ENCODE measurements at regions of chr3 and their contacts with region 1.

Region 1: GRCh38 chr3:124559881-124560574 is 170.2 kb upstream of the UMPS start:
- DNase-seq: peak; percentile 74 to 78
- H3K4me3 ChIP-seq: no peak overlapping the region
- H3K27ac ChIP-seq: peak overlapping the region; percentile 22 to 66
- H3K4me1 ChIP-seq: peaks cover 0 to 37% (median 24%) of the 10 kb centered on the region in 4 donors
- H3K27me3 ChIP-seq: no peaks in the 10 kb centered on the region
- CTCF ChIP-seq: peak; percentile 76 to 87

Region 2: DNA sequence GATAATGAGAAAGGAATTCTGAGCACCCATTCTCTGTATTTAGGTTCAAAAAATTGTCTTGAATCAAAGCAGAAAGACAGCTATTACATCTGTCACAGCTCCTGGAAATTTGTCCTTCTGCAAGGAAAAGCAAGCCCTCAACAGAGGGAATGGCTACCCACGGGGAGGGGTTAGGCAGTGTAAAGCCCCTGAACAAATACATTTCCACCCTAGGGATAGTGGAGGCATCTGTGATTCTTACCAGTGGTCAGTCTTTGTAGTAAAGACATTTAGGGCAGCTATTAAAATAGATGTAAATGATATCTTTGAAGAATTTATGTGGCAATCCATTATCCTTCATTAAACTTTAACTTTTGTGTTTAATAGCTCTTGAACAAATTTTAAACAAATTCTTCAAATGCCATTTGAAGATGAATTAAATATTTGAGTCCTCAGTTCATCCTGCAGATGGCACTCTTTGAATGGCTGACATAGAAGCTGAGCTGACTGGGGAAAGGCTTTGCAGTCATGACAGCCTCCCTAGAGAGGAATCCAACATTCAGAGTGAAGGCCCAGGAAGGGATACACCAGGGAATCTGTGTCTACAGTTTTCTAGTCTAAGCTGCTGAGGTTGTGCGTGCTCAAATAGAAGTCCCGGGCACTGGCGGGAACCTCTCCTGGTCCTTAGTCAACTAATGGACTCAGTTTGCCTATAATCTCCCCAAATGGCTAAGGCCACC is 208.4 kb before region 1 on chr3:
- intact Hi-C with region 1: loop called (anchors 10 kb)
- DNase-seq: no peak
- H3K4me3 ChIP-seq: no peak overlapping the region
- H3K27ac ChIP-seq: peak overlapping the region in 1 of 2 donors; percentile 42
- H3K4me1 ChIP-seq: peaks cover 0 to 16% (median 0%) of the 10 kb centered on the region in 4 donors
- H3K27me3 ChIP-seq: no peaks in the 10 kb centered on the region
- CTCF ChIP-seq: peak; percentile 46 to 68

Region 3: GRCh38 chr3:124688581-124689454 is 128.8 kb after region 1 on chr3:
- intact Hi-C with region 1: loop called (anchors 2 kb)
- DNase-seq: peak; percentile 66 to 78
- H3K4me3 ChIP-seq: no peak overlapping the region
- H3K27ac ChIP-seq: no peak overlapping the region
- H3K4me1 ChIP-seq: peaks cover 0 to 2% (median 0%) of the 10 kb centered on the region in 4 donors
- H3K27me3 ChIP-seq: no peaks in the 10 kb centered on the region
- CTCF ChIP-seq: peak; percentile 76 to 86

Region 4: DNA sequence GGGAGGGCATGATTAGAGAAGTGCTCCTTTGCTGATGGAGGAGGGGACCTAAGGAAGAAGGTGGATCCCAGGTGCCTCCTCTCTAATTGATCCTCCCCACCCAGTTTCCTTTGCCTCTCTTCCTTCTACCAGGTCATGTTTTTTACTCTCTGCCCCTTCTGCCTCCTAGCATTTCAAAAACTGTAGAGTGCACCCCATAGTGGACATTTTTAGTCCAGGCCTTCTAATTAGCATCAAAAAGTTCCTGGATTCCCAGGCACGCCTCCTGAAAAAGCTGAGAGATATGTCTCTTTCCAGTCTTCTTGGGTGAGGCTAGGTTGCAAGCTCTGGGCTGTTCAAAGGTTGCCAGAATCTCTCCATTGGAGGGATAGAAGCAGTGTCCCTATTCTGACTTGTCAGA is 345.8 kb after region 1 on chr3:
- intact Hi-C with region 1: loop called (anchors 10 kb)
- DNase-seq: no peak
- H3K4me3 ChIP-seq: no peak overlapping the region
- H3K27ac ChIP-seq: no peak overlapping the region
- H3K4me1 ChIP-seq: peaks cover 0 to 7% (median 3%) of the 10 kb centered on the region in 4 donors
- H3K27me3 ChIP-seq: no peaks in the 10 kb centered on the region
- CTCF ChIP-seq: no peak

Measured in tibial artery (tissue), 4 donors.